Activated naive CD4-positive, alpha-beta T cell treated with anti-CD3 and anti-CD28 coated beads for 36 hours (primary cell): ENCODE measurements at regions of chr3 and their contacts with region 1.

Region 1: GRCh38 chr3:98593046-98593936 is at the start of gene CPOX:
- DNase-seq: peak; percentile 90
- H3K4me3 Mint-ChIP-seq: peak within 1 kb of the TSS; percentile 88
- H3K27ac Mint-ChIP-seq: peak within 1 kb of the TSS; percentile 82
- H3K4me1 Mint-ChIP-seq: peaks cover 27% of the 10 kb centered on the region
- H3K27me3 Mint-ChIP-seq: no peaks in the 10 kb centered on the region
- total RNA-seq, gene CPOX: 22.0 to 22.3 TPM

Region 2: DNA sequence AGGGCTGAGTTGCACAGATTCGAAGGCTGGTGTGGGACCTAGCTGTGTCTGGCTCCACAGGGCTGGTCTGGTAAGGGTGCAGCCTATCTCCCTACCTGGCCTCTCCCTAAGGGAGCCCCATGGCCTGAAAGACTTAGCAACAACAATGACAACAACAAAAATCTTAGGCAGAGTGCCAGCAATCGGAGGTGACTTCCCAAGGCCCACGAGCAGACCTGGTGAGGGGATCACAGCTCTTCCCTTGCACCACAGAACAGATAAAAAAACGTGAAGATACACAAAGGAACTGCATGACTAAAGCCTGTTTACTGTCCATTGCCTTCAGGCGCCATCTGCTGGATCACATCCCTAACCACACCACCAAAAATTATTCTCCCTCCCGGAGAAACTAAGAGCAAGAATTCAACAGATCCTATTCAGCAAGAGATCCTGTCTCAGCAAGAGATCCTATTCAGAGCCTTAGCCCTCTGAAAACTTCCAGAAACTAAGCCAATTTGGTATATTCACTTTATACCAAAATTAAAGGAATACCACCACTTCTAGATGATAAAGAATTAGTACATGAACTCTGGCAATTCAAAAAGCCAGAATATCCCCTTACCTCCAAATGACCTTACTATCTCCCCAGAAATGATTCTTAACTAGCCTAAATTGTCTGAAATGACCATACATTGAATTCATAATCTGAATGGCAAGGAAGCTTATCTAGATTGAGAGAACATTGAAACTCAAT is 263.7 kb before region 1 on chr3:
- CTCF ChIA-PET with region 1: interaction called, 4 read pairs
- intact Hi-C with region 1: loop called (anchors 5 kb)
- DNase-seq: peak; percentile 57
- H3K4me3 Mint-ChIP-seq: no peak overlapping the region
- H3K27ac Mint-ChIP-seq: no peak overlapping the region
- H3K4me1 Mint-ChIP-seq: no peaks in the 10 kb centered on the region
- H3K27me3 Mint-ChIP-seq: peaks cover 16% of the 10 kb centered on the region

Region 3: GRCh38 chr3:98536456-98537017 is 56.8 kb before region 1 on chr3:
- CTCF ChIA-PET with region 1: no interaction called
- intact Hi-C with region 1: loop called (anchors 1 kb)
- DNase-seq: peak; percentile 14
- H3K4me3 Mint-ChIP-seq: peak overlapping the region; percentile 21
- H3K27ac Mint-ChIP-seq: peak overlapping the region; percentile 50
- H3K4me1 Mint-ChIP-seq: peaks cover 24% of the 10 kb centered on the region
- H3K27me3 Mint-ChIP-seq: peaks cover 6% of the 10 kb centered on the region

Region 4: DNA sequence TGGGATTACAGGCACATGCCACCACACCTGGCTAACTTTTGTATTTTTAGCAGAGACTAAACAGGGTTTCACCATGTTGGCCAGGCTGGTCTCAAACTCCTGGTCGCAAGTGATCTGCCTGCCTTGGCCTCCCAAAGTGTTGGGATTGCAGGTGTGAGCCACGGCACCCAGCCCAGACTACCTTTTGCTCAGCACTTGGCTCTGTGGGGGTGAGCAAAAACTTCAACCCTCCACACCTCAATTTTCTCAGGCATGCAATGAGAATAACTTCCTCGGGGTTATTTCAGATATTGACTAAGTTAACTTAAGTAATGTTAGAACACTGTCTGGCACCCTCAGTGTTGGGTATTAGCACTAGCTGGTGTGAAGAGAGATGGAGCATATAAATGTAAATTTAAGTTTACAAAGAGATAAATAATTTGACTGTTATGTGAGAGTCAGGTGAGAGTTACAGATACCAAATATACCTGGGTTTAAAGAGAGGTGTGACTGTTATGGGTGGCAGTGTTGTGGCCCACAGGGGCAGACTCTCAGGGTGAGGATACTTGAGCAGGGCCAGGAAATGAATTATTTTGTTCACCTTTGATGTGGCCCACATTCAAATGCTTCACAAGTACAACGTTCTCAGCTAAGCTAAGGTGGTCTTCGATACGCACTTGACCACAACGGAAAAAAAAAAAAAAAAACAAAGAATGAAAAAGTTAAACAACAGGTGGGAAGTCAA is 28.8 kb before region 1 on chr3:
- CTCF ChIA-PET with region 1: no interaction called
- intact Hi-C with region 1: loop called (anchors 1 kb)
- DNase-seq: no peak
- H3K4me3 Mint-ChIP-seq: no peak overlapping the region
- H3K27ac Mint-ChIP-seq: no peak overlapping the region
- H3K4me1 Mint-ChIP-seq: peaks cover 63% of the 10 kb centered on the region
- H3K27me3 Mint-ChIP-seq: no peaks in the 10 kb centered on the region

Region 5: DNA sequence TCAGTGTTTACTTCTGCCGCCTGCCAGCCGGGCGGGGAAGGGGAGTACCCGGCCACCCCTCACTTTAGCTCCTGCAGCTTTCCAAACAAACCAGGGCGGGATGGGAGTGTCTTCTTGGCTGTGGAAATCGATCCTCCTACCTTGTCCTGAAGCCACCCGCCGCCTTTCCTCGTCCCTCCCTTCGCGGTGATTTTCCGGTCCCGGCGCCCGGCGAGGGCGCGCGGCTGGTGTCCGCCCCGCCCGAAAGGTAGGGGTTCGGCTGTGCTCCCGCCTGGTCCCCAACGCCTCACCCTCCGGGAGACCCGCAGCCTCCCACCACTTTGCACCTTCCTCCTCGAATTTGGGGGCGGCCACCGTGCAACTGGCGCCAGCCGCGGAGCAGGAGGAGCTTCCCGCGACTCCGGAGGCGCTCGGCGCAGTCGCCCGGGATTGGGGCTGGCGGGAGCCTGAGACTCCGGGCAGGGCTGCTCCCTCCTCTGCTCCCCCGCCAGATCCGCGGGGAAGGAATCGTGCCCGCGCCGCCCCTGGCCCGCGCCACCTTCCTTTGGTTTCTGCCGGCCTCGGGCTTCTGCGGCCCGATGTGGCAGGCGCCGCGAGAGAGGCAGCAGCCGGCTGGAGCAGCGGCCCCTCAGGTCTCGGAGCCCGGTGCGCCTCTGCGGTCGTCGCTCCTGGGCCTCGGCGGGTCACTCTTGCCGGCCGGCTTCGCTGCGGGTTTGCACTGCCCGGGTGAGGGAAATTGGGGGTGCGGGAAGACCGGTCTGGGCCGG is 139.2 kb after region 1 on chr3:
- CTCF ChIA-PET with region 1: no interaction called
- intact Hi-C with region 1: loop called (anchors 2 kb)
- DNase-seq: peak; percentile 25
- H3K4me3 Mint-ChIP-seq: peak overlapping the region; percentile 69
- H3K27ac Mint-ChIP-seq: no peak overlapping the region
- H3K4me1 Mint-ChIP-seq: peaks cover 12% of the 10 kb centered on the region
- H3K27me3 Mint-ChIP-seq: peaks cover 58% of the 10 kb centered on the region

Region 6: DNA sequence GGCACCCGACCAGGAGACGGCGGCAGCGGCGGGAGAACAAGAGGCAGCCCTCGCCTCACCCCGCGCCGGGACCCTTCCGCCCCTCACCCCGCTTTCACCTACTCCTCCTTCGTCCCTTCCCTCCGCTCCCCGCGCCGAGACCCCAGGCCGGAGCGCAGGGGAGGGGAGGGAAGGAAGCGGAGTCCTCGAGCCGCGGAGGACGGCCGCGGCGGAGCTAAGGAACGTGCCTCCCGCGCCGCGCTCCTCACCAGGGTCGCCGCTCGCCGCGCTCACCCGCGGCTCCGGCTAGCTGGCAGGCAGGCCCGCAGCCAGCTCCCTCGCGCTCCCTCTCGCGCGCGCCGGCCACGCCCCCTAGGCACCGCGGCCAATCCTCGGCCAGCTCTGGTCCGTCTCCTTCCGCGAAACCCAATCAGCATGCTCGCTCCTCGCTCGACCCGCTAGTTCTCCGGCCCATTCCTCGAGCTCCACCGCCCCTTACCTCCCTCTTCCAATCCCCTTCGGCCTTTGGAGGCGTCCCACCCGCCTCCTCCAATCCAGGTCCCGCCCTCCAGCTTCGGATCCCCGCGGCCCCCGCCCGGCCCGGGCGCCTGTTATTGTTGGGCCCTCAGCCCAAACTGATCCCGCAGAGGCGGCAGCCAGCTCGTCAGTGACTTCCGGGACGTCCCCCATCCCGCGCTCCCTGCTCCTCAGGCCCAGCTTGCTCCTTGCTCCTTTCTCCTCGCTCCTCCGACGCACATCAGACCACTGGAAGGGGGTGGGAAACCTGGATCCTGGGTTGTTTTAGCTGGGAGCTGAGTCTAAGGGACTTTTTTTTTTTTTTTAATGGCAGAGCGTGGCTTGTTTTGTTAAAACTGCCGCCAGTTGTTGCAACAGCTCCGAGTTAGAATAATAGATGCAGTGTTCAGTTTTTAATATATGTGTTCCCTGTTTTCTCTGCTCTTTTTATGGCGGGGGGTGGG is 308.4 kb after region 1 on chr3 and contains the start of gene DCBLD2:
- CTCF ChIA-PET with region 1: no interaction called
- intact Hi-C with region 1: loop called (anchors 1 kb)
- DNase-seq: peak; percentile 95
- H3K4me3 Mint-ChIP-seq: peak within 1 kb of the TSS; percentile 83
- H3K27ac Mint-ChIP-seq: peak within 1 kb of the TSS; percentile 28
- H3K4me1 Mint-ChIP-seq: peaks cover 12% of the 10 kb centered on the region
- H3K27me3 Mint-ChIP-seq: peaks cover 2% of the 10 kb centered on the region
- total RNA-seq, gene DCBLD2: 1.3 to 2.1 TPM

Region 7: GRCh38 chr3:99753268-99753975 is 1160.1 kb after region 1 on chr3:
- CTCF ChIA-PET with region 1: no interaction called
- intact Hi-C with region 1: loop called (anchors 2 kb)
- DNase-seq: peak; percentile 28
- H3K4me3 Mint-ChIP-seq: no peak overlapping the region
- H3K27ac Mint-ChIP-seq: no peak overlapping the region
- H3K4me1 Mint-ChIP-seq: no peaks in the 10 kb centered on the region
- H3K27me3 Mint-ChIP-seq: peaks cover 4% of the 10 kb centered on the region